Posterior vena cava (tissue), 2 donors: ENCODE measurements at regions of chr9 and their contacts with region 1.

Region 1: GRCh38 chr9:96436063-96436455 is 13.9 kb upstream of the HABP4 start:
- DNase-seq: no peak

Region 2: GRCh38 chr9:95073021-95073607 is 1362.9 kb before region 1 on chr9:
- intact Hi-C with region 1: no loop called
- DNase-seq: no peak

Region 3: GRCh38 chr9:96109680-96110351 is 326.2 kb before region 1 on chr9:
- intact Hi-C with region 1: no loop called
- DNase-seq: no peak

Region 4: DNA sequence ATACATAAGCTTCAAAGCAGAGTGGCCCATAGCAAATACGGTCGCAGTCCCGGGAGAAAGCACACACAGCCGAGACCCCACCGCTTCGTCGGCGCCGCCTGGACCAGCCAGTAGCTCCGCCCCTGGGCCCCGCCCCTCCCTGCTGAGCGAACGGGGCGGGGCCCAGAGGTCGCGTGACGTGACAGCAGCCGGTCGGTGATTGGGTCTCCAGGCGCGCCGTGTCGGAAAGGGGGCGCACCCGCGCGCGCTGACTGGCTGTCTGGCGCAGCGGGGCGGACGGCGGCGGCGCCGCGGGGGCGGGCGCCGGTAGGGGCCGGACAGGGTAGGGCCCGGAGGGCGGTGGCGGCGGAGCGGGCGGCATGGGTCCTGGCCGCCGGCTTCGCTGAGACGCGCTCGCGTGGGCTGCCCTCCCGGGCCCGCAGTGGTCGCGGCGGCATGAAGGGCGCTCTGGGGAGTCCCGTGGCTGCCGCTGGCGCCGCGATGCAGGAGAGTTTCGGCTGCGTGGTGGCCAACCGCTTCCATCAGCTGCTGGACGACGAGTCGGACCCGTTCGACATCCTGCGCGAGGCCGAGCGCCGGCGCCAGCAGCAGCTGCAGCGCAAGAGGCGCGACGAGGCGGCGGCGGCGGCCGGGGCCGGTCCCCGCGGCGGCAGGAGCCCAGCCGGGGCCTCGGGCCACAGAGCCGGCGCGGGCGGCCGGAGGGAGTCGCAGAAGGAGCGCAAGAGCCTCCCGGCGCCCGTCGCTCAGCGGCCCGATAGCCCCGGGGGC is 14.0 kb after region 1 on chr9 and contains the start of gene HABP4:
- intact Hi-C with region 1: loop called in 1 of 2 experiments (anchors 1 kb)
- DNase-seq: peak; percentile 99
- total RNA-seq, gene HABP4: 30.9 to 37.4 TPM

Region 5: GRCh38 chr9:96646081-96646991 is 210.3 kb after region 1 on chr9:
- intact Hi-C with region 1: loop called in 1 of 2 experiments (anchors 10 kb)
- DNase-seq: no peak